PC-3 (cell line): ENCODE measurements at regions of chr4 and their contacts with region 1.

Region 1: GRCh38 chr4:20251796-20252655 is at the start of gene SLIT2:
- DNase-seq: peak; percentile 82
- ATAC-seq: peak; percentile 66
- H3K4me3 ChIP-seq: peak within 1 kb of the TSS; percentile 96
- H3K27ac ChIP-seq: peak within 1 kb of the TSS; percentile 28; the same call in 1 of the 2 replicates
- H3K4me1 ChIP-seq: peaks cover 32% of the 10 kb centered on the region
- H3K27me3 ChIP-seq: no peaks in the 10 kb centered on the region
- CTCF ChIP-seq: no peak
- total RNA-seq, gene SLIT2: 19.1 and 28.7 TPM in 2 replicates

Region 2: DNA sequence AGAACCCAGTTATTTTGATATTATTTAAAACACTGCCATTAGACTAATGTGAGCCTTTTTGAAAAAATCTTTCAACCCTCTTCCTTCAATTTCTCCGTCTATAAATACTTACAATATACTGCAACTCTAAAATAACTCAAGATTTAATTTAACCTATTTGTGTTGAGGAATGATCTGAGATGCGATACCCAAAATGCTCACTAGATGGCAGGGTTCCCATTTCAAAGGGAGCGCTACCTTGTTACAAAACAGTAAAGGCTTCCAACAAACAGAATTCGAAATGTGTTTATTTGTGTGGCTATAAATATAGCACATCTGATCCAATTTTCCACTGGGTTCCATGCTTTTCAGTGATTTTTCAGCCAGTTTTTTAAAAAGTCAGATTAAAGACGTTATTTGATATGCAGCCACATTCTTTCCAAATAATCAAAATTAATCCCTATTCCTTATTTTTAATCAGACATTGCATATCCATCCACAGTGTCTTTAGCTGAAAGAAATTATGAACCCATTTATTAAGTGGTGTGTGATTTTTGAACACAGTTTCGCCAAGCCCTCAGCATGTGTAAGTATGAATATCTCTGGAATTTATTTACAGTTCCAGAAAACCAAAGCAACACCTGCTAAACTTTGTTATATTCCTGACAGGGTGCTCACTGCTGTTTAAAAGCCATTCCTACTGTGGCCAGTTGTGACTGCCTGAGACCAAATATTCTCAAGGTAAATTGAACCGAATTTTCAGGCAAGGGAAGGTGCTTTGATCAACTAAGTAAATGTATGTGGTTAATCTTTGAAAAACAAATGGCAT is 1562.5 kb before region 1 on chr4:
- CTCF ChIA-PET with region 1: no interaction called
- POLR2A ChIA-PET with region 1: no interaction called
- intact Hi-C with region 1: loop called (anchors 2 kb)
- DNase-seq: peak; percentile 76
- ATAC-seq: no peak
- H3K4me3 ChIP-seq: no peak overlapping the region
- H3K27ac ChIP-seq: no peak overlapping the region
- H3K4me1 ChIP-seq: peaks cover 18% of the 10 kb centered on the region
- H3K27me3 ChIP-seq: no peaks in the 10 kb centered on the region
- CTCF ChIP-seq: peak; percentile 85

Region 3: DNA sequence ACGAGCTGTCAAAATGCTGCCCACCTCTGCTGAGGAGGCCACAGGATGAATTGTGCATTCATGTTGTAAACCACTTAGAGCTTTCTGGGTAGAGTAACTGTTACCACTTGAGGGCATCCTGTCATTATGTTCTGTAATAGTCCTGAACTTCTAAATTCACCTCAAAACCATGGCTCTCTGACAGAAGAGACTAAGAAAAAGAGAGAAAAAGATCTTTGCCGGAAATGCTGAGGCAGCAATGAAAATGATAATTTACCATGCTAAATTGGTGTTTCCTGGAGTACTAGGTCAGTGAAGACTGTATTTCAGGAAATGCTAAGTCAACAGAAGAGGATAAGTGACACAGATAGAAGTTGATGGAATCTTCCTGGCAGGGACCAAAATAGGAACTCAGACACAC is 942.6 kb before region 1 on chr4:
- CTCF ChIA-PET with region 1: interaction called, 3 read pairs
- POLR2A ChIA-PET with region 1: no interaction called
- intact Hi-C with region 1: loop called (anchors 2 kb)
- DNase-seq: peak; percentile 52
- ATAC-seq: peak; percentile 77
- H3K4me3 ChIP-seq: no peak overlapping the region
- H3K27ac ChIP-seq: no peak overlapping the region
- H3K4me1 ChIP-seq: peaks cover 28% of the 10 kb centered on the region
- H3K27me3 ChIP-seq: no peaks in the 10 kb centered on the region
- CTCF ChIP-seq: peak; percentile 60

Region 4: GRCh38 chr4:19486400-19486799 is 765.6 kb before region 1 on chr4:
- CTCF ChIA-PET with region 1: no interaction called
- POLR2A ChIA-PET with region 1: no interaction called
- intact Hi-C with region 1: loop called (anchors 2 kb)
- DNase-seq: peak; percentile 53
- ATAC-seq: peak; percentile 61
- H3K4me3 ChIP-seq: no peak overlapping the region
- H3K27ac ChIP-seq: no peak overlapping the region
- H3K4me1 ChIP-seq: no peaks in the 10 kb centered on the region
- H3K27me3 ChIP-seq: no peaks in the 10 kb centered on the region
- CTCF ChIP-seq: peak; percentile 29; the same call in 1 of the 2 replicates

Region 5: GRCh38 chr4:19850909-19851308 is 401.1 kb before region 1 on chr4:
- CTCF ChIA-PET with region 1: interaction called, 4 read pairs
- POLR2A ChIA-PET with region 1: no interaction called
- intact Hi-C with region 1: loop called (anchors 2 kb)
- DNase-seq: peak; percentile 92
- ATAC-seq: peak; percentile 99
- H3K4me3 ChIP-seq: peak overlapping the region; percentile 29; the same call in 1 of the 2 replicates
- H3K27ac ChIP-seq: peak overlapping the region; percentile 89
- H3K4me1 ChIP-seq: peaks cover 18% of the 10 kb centered on the region
- H3K27me3 ChIP-seq: no peaks in the 10 kb centered on the region
- CTCF ChIP-seq: peak; percentile 54

Region 6: DNA sequence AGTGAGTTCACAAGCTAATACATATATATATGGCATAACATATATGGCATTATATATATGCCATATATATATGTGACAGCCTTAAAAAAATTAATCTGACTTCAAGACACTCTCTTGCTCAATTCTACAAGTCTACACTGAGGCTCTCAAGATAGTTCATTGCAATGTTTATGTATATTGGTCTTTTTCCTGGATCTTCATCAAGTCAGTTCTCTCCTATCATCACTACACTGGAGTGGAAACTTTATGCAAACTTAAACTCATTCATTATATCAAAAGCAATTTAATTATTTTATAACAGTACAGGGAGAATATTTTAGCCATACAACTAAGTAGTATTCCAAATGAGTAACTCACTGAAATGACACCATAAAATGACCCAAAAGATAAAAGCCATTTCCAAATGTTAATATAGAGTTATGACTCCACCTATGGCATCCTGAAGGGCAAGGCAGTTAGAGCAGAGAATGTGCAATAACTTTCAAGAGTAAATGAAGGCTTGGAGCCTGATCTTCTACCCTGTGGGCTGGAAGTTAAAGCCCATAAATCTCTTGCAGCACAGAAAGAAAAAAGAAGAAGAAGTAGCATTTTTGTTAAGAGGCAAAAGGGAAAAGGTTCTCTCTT is 176.7 kb before region 1 on chr4:
- CTCF ChIA-PET with region 1: no interaction called
- POLR2A ChIA-PET with region 1: no interaction called
- intact Hi-C with region 1: loop called (anchors 10 kb)
- DNase-seq: peak; percentile 38
- ATAC-seq: peak; percentile 60
- H3K4me3 ChIP-seq: no peak overlapping the region
- H3K27ac ChIP-seq: no peak overlapping the region
- H3K4me1 ChIP-seq: no peaks in the 10 kb centered on the region
- H3K27me3 ChIP-seq: no peaks in the 10 kb centered on the region
- CTCF ChIP-seq: peak; percentile 35

Region 7: GRCh38 chr4:20313237-20314030 is 61.4 kb after region 1 on chr4:
- CTCF ChIA-PET with region 1: no interaction called
- POLR2A ChIA-PET with region 1: no interaction called
- intact Hi-C with region 1: no loop called
- DNase-seq: no peak
- ATAC-seq: peak; percentile 27; the same call in 1 of the 2 replicates
- H3K4me3 ChIP-seq: no peak overlapping the region
- H3K27ac ChIP-seq: no peak overlapping the region
- H3K4me1 ChIP-seq: no peaks in the 10 kb centered on the region
- H3K27me3 ChIP-seq: no peaks in the 10 kb centered on the region
- CTCF ChIP-seq: no peak; the same call in 1 of the 2 replicates